Mammary epithelial cell (primary cell): ENCODE measurements at regions of chr2 and their contacts with region 1.

Region 1: GRCh38 chr2:107936433-107937359 is 49.6 kb upstream of the SLC5A7 start:
- DNase-seq: no peak
- H3K4me3 ChIP-seq: no peak overlapping the region
- H3K27ac ChIP-seq: no peak overlapping the region
- H3K4me1 ChIP-seq: no peaks in the 10 kb centered on the region
- H3K27me3 ChIP-seq: no peaks in the 10 kb centered on the region
- CTCF ChIP-seq: peak; percentile 30 to 42

Region 2: GRCh38 chr2:107986278-107987217 is 49.9 kb after region 1 on chr2 and contains the start of gene SLC5A7:
- CTCF ChIA-PET with region 1: no interaction called
- dilution Hi-C with region 1: no loop called
- in situ Hi-C with region 1: no loop called
- intact Hi-C with region 1: no loop called
- DNase-seq: no peak
- H3K4me3 ChIP-seq: no peak within 1 kb of the TSS
- H3K27ac ChIP-seq: no peak within 1 kb of the TSS
- H3K4me1 ChIP-seq: no peaks in the 10 kb centered on the region
- H3K27me3 ChIP-seq: peaks cover 7% of the 10 kb centered on the region
- CTCF ChIP-seq: no peak
- total RNA-seq, gene SLC5A7: not detected

Region 3: GRCh38 chr2:108169982-108170625 is 233.4 kb after region 1 on chr2:
- CTCF ChIA-PET with region 1: no interaction called
- dilution Hi-C with region 1: no loop called
- in situ Hi-C with region 1: loop called in 1 of 2 experiments (anchors 25 kb)
- intact Hi-C with region 1: loop called (anchors 1 kb)
- DNase-seq: peak; percentile 19
- H3K4me3 ChIP-seq: no peak overlapping the region
- H3K27ac ChIP-seq: no peak overlapping the region
- H3K4me1 ChIP-seq: no peaks in the 10 kb centered on the region
- H3K27me3 ChIP-seq: no peaks in the 10 kb centered on the region
- CTCF ChIP-seq: peak; percentile 49 to 57

Region 4: GRCh38 chr2:108184419-108184818 is 247.7 kb after region 1 on chr2:
- CTCF ChIA-PET with region 1: interaction called, 3 read pairs
- dilution Hi-C with region 1: no loop called
- in situ Hi-C with region 1: loop called in 1 of 2 experiments (anchors 25 kb)
- intact Hi-C with region 1: loop called (anchors 1 kb)
- DNase-seq: no peak
- H3K4me3 ChIP-seq: no peak overlapping the region
- H3K27ac ChIP-seq: no peak overlapping the region
- H3K4me1 ChIP-seq: no peaks in the 10 kb centered on the region
- H3K27me3 ChIP-seq: no peaks in the 10 kb centered on the region
- CTCF ChIP-seq: peak; percentile 44 to 69